ENCODE measurements at regions of chr1 and their contacts with region 1.

Region 1: GRCh38 chr1:154961497-154962262 is at the start of gene PYGO2:
- DNase-seq: peak; percentile 90
- ATAC-seq: peak; percentile 80
- H3K4me3 Mint-ChIP-seq: peak within 1 kb of the TSS; percentile 94
- H3K27ac Mint-ChIP-seq: peak within 1 kb of the TSS; percentile 90
- H3K4me1 Mint-ChIP-seq: peaks cover 24% of the 10 kb centered on the region
- H3K27me3 Mint-ChIP-seq: no peaks in the 10 kb centered on the region
- total RNA-seq, gene PYGO2: 55.3 TPM

Region 2: DNA sequence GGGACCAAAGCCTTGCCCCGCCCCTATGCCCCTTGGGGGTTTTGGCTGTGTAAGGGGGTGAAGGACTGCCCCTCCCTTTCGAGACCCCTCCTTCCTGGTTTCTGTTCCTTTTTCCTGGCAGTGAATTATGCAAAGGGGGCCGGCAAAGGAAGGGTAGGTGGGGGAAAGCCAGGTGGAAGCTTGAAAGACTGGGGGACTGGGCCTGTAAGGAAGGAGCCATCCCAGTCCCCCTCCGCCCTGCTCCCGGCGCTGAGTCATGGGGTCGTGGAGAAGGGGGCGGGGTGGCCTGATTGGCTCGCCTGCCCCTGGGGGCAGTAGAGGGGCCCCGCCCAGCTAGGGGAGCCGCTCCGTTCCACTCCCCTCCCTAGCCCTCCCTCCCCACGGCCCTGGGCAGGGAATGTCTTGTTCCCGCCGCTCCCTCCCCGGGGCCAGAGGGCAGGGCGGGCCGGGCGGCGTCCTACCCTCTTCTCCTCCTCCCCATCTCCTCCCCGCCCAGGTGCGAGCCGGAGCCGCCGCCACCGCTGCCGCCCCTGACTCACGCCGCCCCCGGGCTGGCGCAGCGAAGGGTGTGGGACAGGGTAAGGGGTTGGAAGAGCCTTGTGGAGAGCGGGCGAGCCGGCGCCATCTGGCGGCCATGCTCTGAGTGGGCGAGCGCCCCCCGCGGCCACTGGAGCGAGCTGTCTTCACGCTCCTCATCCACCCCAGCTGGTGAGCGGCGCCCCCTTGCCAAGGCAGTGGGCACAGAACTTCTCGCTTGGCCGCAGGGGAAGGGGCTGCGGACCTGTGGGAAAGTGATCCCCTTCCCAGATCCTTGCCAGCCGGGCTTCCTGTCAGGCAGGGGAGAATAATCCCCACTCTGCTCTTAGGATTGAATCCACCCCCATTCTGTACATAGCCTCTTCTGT is 55.6 kb after region 1 on chr1:
- POLR2A ChIA-PET with region 1: interaction called, 18 read pairs
- DNase-seq: peak; percentile 92
- ATAC-seq: peak; percentile 98
- H3K4me3 Mint-ChIP-seq: peak overlapping the region; percentile 74
- H3K27ac Mint-ChIP-seq: peak overlapping the region; percentile 70
- H3K4me1 Mint-ChIP-seq: peaks cover 42% of the 10 kb centered on the region
- H3K27me3 Mint-ChIP-seq: peaks cover 5% of the 10 kb centered on the region

Region 3: DNA sequence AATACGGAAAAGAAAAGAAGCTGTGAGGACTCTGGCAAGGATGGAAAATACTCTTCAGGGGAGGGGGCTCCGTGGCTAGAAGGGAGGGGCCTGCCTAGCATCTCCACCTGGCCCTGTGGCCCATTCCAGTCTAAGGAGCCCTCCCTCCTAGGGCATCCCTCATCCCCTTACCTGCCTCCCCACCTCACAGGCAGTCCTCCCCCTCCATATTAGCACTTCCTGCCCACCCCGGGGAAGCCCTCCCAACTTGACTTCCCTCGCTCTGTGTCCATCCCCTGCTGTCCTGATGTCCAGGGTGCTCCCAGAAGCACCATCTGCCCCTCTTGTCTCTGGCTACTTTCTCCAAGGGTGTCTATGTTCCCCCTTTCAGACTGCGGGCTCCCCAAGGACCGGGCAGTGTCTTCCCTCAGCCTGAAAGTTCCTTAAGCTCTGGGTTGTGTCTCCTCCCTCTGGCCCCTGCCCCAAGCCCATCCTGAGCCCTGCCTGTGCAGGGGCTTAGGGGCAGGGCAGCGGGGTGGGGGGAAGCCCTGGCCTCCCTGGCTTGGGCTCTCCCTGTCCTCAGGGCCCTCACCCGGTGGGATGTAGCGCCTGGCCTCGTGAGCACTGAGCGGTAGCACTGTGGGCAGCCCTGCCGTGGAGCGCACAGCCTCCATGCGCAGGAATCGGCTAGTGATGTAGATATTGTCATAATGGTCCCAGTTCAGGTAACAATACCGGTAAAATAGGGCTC is 68.0 kb after region 1 on chr1:
- POLR2A ChIA-PET with region 1: no interaction called
- DNase-seq: no peak
- ATAC-seq: no peak
- H3K4me3 Mint-ChIP-seq: no peak overlapping the region
- H3K27ac Mint-ChIP-seq: no peak overlapping the region
- H3K4me1 Mint-ChIP-seq: no peaks in the 10 kb centered on the region
- H3K27me3 Mint-ChIP-seq: peaks cover 6% of the 10 kb centered on the region

Measured in activated naive CD8-positive, alpha-beta T cell treated with anti-CD3 and anti-CD28 coated beads, Interleukin-2, amount 10 ng/mL, durations not matched to agents 7 days and 5 days (primary cell).